ENCODE measurements at regions of chr17 and their contacts with region 1.

Region 1: DNA sequence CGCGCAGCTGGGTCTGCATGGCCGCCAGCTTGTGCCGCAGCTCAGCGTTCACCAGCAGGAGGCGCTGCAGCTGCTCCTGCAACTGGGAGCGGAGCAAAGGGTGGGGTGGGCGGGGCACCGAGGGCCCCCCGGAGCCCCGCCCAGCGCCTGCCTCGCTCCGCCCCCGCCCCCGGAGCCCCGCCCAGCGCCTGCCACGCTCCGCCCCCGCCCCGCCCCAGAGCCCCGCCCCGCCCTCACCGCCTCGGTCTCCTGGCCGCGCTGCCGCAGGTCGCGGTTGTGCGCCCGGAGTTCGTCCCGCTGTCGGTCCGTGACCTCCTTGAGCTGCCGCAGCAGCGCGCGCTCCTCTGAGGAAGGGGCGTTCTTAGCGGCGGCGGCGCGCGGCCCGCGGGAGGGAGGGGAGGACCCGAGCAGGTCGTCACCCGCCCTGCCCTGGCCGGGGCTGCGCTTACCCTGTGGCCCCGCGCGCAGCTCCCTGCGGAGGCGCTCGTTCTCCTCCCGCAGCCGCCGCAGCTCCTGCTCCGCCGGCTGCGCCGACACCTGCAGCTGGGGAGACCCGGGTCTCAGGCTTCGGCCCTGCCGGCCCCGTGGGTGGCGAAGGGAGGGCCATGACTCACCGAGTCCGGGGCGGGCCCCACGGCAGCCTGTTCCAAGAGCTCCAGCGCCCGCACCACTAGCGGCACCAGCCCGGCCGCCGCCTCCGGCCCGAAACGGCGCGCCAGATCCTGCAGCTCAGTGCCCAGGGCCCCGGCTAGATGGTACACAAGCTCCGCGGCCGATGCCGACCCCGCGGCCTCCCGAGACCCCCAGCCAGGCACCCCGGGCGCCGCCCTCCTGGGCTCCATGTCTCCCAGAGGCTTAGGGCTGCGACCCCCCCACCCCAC is 463 bp downstream of the RILP start:
- DNase-seq: peak; percentile 89 to 99 (median 95)
- ATAC-seq: peak; percentile 78
- H3K4me3 ChIP-seq: peak overlapping the region; percentile 51
- H3K4me3 Mint-ChIP-seq: peak overlapping the region; percentile 79
- H3K27ac ChIP-seq: peak overlapping the region; percentile 45 to 53
- H3K27ac Mint-ChIP-seq: peak overlapping the region; percentile 33
- H3K4me1 ChIP-seq: peaks cover 41% of the 10 kb centered on the region
- H3K4me1 Mint-ChIP-seq: peaks cover 18% of the 10 kb centered on the region
- H3K27me3 ChIP-seq: no peaks in the 10 kb centered on the region
- H3K27me3 Mint-ChIP-seq: no peaks in the 10 kb centered on the region
- CTCF ChIP-seq: peak; percentile 75

Region 2: GRCh38 chr17:1561400-1562175 is 87.6 kb before region 1 on chr17:
- CTCF ChIA-PET with region 1: interaction called, 10 read pairs
- POLR2A ChIA-PET with region 1: interaction called, 5 read pairs
- intact Hi-C with region 1: no loop called
- DNase-seq: peak in 11 of 14 experiments; percentile 14 to 68 (median 33)
- ATAC-seq: peak; percentile 40
- H3K4me3 ChIP-seq: peak overlapping the region; percentile 51
- H3K4me3 Mint-ChIP-seq: peak overlapping the region; percentile 88
- H3K27ac ChIP-seq: no peak overlapping the region
- H3K27ac Mint-ChIP-seq: peak overlapping the region; percentile 65
- H3K4me1 ChIP-seq: peaks cover 41% of the 10 kb centered on the region
- H3K4me1 Mint-ChIP-seq: peaks cover 37% of the 10 kb centered on the region
- H3K27me3 ChIP-seq: no peaks in the 10 kb centered on the region
- H3K27me3 Mint-ChIP-seq: no peaks in the 10 kb centered on the region
- CTCF ChIP-seq: peak; percentile 23

Region 3: DNA sequence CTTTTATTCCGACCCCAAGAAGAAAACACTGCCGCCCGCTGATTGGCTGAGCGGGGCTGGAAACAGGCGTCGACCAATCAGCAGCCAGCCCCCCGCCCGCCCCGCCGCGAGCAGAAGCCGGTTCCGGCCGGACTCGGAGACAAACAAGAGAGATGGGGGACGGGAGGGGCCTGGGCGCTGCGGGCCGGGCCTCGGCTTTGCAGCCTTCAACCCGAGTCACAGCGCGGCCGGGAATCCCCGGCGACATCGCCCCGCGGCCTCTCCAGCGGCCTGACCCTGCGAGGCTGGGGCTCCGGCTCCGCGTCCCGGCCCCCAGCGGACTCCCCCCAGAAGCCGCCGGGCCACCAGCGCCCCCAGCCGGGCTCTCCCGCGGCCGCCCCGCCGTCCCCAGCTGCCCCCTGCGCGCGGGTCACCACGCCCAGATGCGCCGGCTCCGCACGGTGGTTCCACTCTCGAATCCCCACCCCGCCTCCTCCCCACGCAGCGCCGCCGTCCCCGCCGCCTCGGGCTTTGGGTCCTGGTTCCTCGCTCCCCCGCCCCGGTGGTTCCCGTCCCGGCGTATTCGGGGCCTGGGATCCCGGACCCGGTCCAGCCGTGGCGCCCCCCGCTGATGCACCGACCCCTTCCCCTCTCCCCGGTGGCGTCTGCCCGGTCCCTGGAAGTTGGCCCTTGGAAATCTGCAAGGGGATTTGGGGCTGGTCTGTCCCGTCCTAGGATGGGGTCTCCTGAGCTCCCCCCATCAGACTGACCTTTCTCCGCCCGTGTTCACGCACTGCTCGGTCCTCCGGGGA is 20.2 kb before region 1 on chr17:
- CTCF ChIA-PET with region 1: interaction called, 12 read pairs
- POLR2A ChIA-PET with region 1: interaction called, 44 read pairs
- intact Hi-C with region 1: loop called in 1 of 2 experiments (anchors 1 kb)
- DNase-seq: peak; percentile 76 to 94 (median 87)
- ATAC-seq: peak; percentile 75
- H3K4me3 ChIP-seq: peak overlapping the region; percentile 76
- H3K4me3 Mint-ChIP-seq: peak overlapping the region; percentile 96
- H3K27ac ChIP-seq: peak overlapping the region in 1 of 2 donors; percentile 46
- H3K27ac Mint-ChIP-seq: peak overlapping the region; percentile 77
- H3K4me1 ChIP-seq: peaks cover 34% of the 10 kb centered on the region
- H3K4me1 Mint-ChIP-seq: peaks cover 23% of the 10 kb centered on the region
- H3K27me3 ChIP-seq: peaks cover 0 to 5% of the 10 kb centered on the region in 2 experiments
- H3K27me3 Mint-ChIP-seq: no peaks in the 10 kb centered on the region
- CTCF ChIP-seq: no peak

Region 4: GRCh38 chr17:1684378-1685189 is 35.4 kb after region 1 on chr17 and contains the start of gene PRPF8:
- CTCF ChIA-PET with region 1: interaction called, 6 read pairs
- POLR2A ChIA-PET with region 1: interaction called, 29 read pairs
- intact Hi-C with region 1: loop called (anchors 1 to 5 kb)
- DNase-seq: peak; percentile 97 to 99 (median 98)
- ATAC-seq: peak; percentile 96
- H3K4me3 ChIP-seq: peak within 1 kb of the TSS; percentile 93
- H3K4me3 Mint-ChIP-seq: peak within 1 kb of the TSS; percentile 99
- H3K27ac ChIP-seq: peak within 1 kb of the TSS; percentile 86 to 95
- H3K27ac Mint-ChIP-seq: peak within 1 kb of the TSS; percentile 96
- H3K4me1 ChIP-seq: peaks cover 33% of the 10 kb centered on the region
- H3K4me1 Mint-ChIP-seq: peaks cover 49% of the 10 kb centered on the region
- H3K27me3 ChIP-seq: no peaks in the 10 kb centered on the region
- H3K27me3 Mint-ChIP-seq: no peaks in the 10 kb centered on the region
- CTCF ChIP-seq: no peak
- total RNA-seq, gene PRPF8: 550 to 572 TPM

Region 5: DNA sequence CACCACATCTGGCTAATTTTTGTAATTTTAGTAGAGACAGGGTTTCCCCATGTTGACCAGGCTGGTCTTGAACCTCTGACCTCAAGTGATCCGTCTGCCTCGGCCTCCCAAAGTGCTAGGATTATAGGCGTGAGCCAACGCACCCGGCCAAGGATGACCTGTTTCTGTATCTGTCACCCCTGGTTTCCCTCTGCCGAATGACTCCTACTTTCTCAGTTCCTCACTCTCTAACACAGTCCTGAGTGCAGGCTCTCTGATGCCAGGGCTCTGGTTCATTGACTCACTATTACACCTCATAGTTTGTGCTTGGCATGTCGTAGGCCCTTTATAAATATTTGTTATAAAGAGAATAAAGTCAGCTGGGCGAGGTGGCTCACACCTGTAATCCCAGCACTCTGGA is 46.2 kb after region 1 on chr17:
- CTCF ChIA-PET with region 1: no interaction called
- POLR2A ChIA-PET with region 1: no interaction called
- intact Hi-C with region 1: no loop called
- DNase-seq: no peak
- ATAC-seq: no peak
- H3K4me3 ChIP-seq: no peak overlapping the region
- H3K4me3 Mint-ChIP-seq: no peak overlapping the region
- H3K27ac ChIP-seq: no peak overlapping the region
- H3K27ac Mint-ChIP-seq: no peak overlapping the region
- H3K4me1 ChIP-seq: no peaks in the 10 kb centered on the region
- H3K4me1 Mint-ChIP-seq: no peaks in the 10 kb centered on the region
- H3K27me3 ChIP-seq: no peaks in the 10 kb centered on the region
- H3K27me3 Mint-ChIP-seq: no peaks in the 10 kb centered on the region
- CTCF ChIP-seq: no peak

Region 6: GRCh38 chr17:1829592-1830257 is 180.5 kb after region 1 on chr17 and contains the starts of genes RPA1 and SMYD4:
- CTCF ChIA-PET with region 1: interaction called, 10 read pairs
- POLR2A ChIA-PET with region 1: interaction called, 10 read pairs
- intact Hi-C with region 1: no loop called
- DNase-seq: peak; percentile 71 to 95 (median 84)
- ATAC-seq: peak; percentile 98
- H3K4me3 ChIP-seq: peak within 1 kb of the TSS; percentile 87
- H3K4me3 Mint-ChIP-seq: peak within 1 kb of the TSS; percentile 99
- H3K27ac ChIP-seq: peak within 1 kb of the TSS; percentile 61 to 81
- H3K27ac Mint-ChIP-seq: peak within 1 kb of the TSS; percentile 90
- H3K4me1 ChIP-seq: peaks cover 51% of the 10 kb centered on the region
- H3K4me1 Mint-ChIP-seq: peaks cover 66% of the 10 kb centered on the region
- H3K27me3 ChIP-seq: no peaks in the 10 kb centered on the region
- H3K27me3 Mint-ChIP-seq: no peaks in the 10 kb centered on the region
- CTCF ChIP-seq: no peak
- total RNA-seq, gene RPA1: 38.6 to 38.7 TPM
- total RNA-seq, gene SMYD4: 9.3 to 10.6 TPM

Region 7: GRCh38 chr17:2029911-2030778 is 380.9 kb after region 1 on chr17 and contains the start of gene DPH1:
- CTCF ChIA-PET with region 1: interaction called, 6 read pairs
- POLR2A ChIA-PET with region 1: no interaction called
- intact Hi-C with region 1: loop called in 1 of 2 experiments (anchors 5 kb)
- DNase-seq: peak; percentile 74 to 92 (median 81)
- ATAC-seq: peak; percentile 82
- H3K4me3 ChIP-seq: peak within 1 kb of the TSS; percentile 100
- H3K4me3 Mint-ChIP-seq: peak within 1 kb of the TSS; percentile 94
- H3K27ac ChIP-seq: peak within 1 kb of the TSS; percentile 60 to 70
- H3K27ac Mint-ChIP-seq: peak within 1 kb of the TSS; percentile 86
- H3K4me1 ChIP-seq: peaks cover 45% of the 10 kb centered on the region
- H3K4me1 Mint-ChIP-seq: peaks cover 34% of the 10 kb centered on the region
- H3K27me3 ChIP-seq: peaks cover 12 to 16% of the 10 kb centered on the region in 2 experiments
- H3K27me3 Mint-ChIP-seq: peaks cover 26% of the 10 kb centered on the region
- CTCF ChIP-seq: no peak
- total RNA-seq, gene DPH1: 96.4 to 101 TPM